Heart left ventricle (tissue), 16 donors: ENCODE measurements at regions of chr1 and their contacts with region 1.

Region 1: GRCh38 chr1:113226148-113226547 is 153.2 kb downstream of the LRIG2 start:
- DNase-seq: peak in 1 of 5 donors; percentile 38
- ATAC-seq: peak in 3 of 4 donors; percentile 50 to 74 (median 70)
- H3K4me3 ChIP-seq: peak overlapping the region in 4 of 12 donors; percentile 11 to 33 (median 29)
- H3K27ac ChIP-seq: peak overlapping the region in 4 of 12 donors; percentile 28 to 61 (median 52)
- H3K4me1 ChIP-seq: peaks cover 0 to 6% (median 0%) of the 10 kb centered on the region in 12 donors
- H3K27me3 ChIP-seq: no peaks in the 10 kb centered on the region
- CTCF ChIP-seq: no peak
- POLR2A ChIP-seq: no peak

Region 2: DNA sequence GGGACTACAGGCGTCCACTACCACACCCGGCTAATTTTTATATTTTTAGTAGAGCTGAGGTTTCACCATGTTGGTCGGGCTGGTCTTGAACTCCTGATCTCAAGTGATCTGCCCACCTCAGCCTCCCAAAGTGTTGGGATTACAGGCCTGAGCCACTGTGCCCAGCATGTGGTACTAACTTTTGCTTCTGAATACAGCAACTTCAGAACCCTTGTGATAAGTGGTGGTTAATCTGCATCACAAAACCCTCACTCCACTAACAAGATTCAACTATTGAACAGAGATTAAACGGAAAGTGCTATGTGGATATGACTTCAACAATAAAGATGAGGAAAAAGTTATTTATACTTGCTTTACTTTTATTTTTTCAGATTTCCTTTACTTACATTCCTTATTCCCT is 314.6 kb before region 1 on chr1:
- intact Hi-C with region 1: no loop called
- DNase-seq: no peak
- ATAC-seq: no peak
- H3K4me3 ChIP-seq: no peak overlapping the region
- H3K27ac ChIP-seq: no peak overlapping the region
- H3K4me1 ChIP-seq: peaks cover 0 to 18% (median 5%) of the 10 kb centered on the region in 12 donors
- H3K27me3 ChIP-seq: no peaks in the 10 kb centered on the region
- CTCF ChIP-seq: no peak
- POLR2A ChIP-seq: no peak

Region 3: GRCh38 chr1:113036639-113037321 is 189.4 kb before region 1 on chr1:
- intact Hi-C with region 1: no loop called
- DNase-seq: no peak
- ATAC-seq: no peak
- H3K4me3 ChIP-seq: no peak overlapping the region
- H3K27ac ChIP-seq: no peak overlapping the region
- H3K4me1 ChIP-seq: peaks cover 0 to 5% (median 0%) of the 10 kb centered on the region in 12 donors
- H3K27me3 ChIP-seq: no peaks in the 10 kb centered on the region
- CTCF ChIP-seq: no peak
- POLR2A ChIP-seq: no peak

Region 4: GRCh38 chr1:113325039-113325438 is 98.9 kb after region 1 on chr1:
- intact Hi-C with region 1: no loop called
- DNase-seq: no peak
- ATAC-seq: no peak
- H3K4me3 ChIP-seq: no peak overlapping the region
- H3K27ac ChIP-seq: no peak overlapping the region
- H3K4me1 ChIP-seq: peaks cover 0 to 11% (median 0%) of the 10 kb centered on the region in 12 donors
- H3K27me3 ChIP-seq: no peaks in the 10 kb centered on the region
- CTCF ChIP-seq: no peak
- POLR2A ChIP-seq: no peak

Region 5: DNA sequence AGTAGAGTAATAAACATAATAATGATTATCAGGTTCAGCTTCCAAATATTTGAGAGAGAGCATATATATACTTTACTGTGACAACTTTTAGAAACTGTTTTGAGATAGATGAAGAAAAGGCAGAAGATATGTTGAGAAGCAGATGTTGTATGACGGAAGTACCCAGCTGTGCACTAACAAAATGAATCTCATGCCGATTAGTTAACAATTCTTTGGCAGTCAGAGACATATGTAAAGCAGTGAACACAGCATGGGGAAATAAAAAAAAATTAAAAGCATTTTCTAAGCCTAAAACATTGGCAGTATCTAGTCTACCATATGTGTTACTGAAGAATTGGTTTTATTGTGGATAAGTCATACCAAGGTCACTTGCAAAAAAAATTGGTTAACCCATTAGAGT is 216.0 kb after region 1 on chr1:
- intact Hi-C with region 1: loop called in 1 of 10 experiments (anchors 5 kb)
- DNase-seq: no peak
- ATAC-seq: no peak
- H3K4me3 ChIP-seq: no peak overlapping the region
- H3K27ac ChIP-seq: no peak overlapping the region
- H3K4me1 ChIP-seq: peaks cover 0 to 6% (median 0%) of the 10 kb centered on the region in 12 donors
- H3K27me3 ChIP-seq: no peaks in the 10 kb centered on the region
- CTCF ChIP-seq: no peak
- POLR2A ChIP-seq: no peak